ENCODE measurements at regions of chr10 and their contacts with region 1.

Region 1: GRCh38 chr10:70227548-70228320 is 5.5 kb downstream of the PPA1 start:
- DNase-seq: no peak
- H3K4me3 ChIP-seq: no peak overlapping the region
- H3K27me3 ChIP-seq: no peaks in the 10 kb centered on the region
- CTCF ChIP-seq: no peak

Region 2: DNA sequence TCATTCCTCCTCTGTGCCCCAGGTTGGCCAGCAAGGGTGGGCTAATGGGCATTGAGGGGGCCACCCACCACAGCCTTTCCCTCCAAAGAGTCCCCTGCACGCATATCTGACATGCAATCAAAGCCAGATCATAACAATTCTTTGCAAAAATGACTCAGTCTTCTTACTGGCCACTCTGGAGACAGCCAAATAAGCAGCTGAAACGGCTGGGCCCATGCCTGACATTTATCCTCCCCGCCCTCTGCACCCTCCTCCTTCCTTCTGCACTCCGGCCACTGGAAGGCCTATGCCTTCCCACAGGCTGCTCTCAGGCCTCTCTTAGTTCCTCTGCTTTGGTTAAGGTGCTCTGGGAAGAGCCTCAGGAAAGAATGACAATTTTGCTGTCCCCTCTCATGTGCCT is 85.2 kb after region 1 on chr10:
- CTCF ChIA-PET with region 1: no interaction called
- POLR2A ChIA-PET with region 1: no interaction called
- DNase-seq: no peak
- H3K4me3 ChIP-seq: no peak overlapping the region
- H3K27me3 ChIP-seq: no peaks in the 10 kb centered on the region
- CTCF ChIP-seq: no peak

Region 3: DNA sequence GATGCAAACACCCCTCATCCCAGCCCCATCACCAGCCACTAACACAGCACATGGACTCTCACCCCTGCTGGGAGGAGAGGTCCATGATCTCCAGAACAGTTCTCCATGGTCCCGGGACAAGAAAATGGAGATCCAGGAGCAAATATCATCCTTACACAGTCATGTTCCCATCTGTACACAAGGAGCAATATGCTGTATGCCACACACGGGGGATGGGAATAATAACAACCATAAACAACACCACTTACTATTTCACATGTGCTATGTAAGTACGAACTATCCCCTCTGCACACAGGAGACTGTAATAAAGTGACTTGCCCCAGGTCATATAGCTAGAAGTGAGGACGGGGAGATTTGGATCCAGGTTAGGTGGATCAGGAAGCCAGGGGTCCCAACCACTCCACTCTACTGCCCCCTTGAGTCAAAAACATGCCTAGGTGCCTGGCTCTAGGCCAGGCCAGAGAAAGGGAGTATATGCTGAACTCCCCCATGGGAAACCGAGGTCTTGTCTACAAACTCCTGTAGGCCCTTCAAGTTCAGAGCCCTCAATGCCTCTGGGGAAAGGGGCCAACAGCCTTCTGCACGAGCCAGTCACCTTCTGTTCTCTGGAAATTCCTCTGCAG is 120.6 kb after region 1 on chr10:
- CTCF ChIA-PET with region 1: interaction called, 23 read pairs
- POLR2A ChIA-PET with region 1: no interaction called
- DNase-seq: no peak
- H3K4me3 ChIP-seq: no peak overlapping the region
- H3K27me3 ChIP-seq: no peaks in the 10 kb centered on the region
- CTCF ChIP-seq: peak; percentile 73

Measured in BJ (cell line).